ENCODE measurements at regions of chr18 and their contacts with region 1.

Region 1: DNA sequence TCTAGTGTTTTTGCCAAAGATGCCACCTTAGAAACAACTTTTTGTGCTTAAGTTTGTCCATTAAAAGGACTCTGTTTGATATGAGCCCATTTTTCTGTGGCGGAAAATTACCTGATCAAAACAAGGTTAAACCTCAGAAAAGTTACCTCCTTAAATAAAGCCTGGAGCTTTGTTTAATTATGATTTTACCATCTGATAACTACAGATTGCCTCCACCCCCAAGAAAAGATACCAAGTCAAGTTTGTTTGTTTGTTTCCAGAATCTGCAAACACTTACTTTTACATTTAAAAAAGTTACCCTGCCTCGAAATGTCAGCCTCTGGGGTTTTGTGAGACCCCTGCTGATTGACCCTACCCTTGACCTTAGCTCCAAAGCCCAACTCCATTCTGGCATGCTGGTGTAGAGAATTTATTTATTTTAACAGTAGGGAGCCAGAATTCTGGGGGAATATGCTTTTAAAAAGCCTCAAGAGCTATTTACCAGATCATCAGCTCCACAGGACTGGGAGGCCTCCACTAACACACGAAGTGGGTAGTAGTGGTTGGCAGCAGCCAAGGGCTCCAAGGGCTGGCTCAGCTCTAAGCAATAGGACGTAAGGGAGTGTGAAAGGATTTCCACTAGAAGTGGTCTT is 23.3 kb upstream of the GREB1L start:
- DNase-seq: no peak
- ATAC-seq: no peak
- H3K4me3 ChIP-seq: no peak overlapping the region
- H3K27ac ChIP-seq: no peak overlapping the region
- H3K4me1 ChIP-seq: no peaks in the 10 kb centered on the region
- H3K27me3 ChIP-seq: no peaks in the 10 kb centered on the region
- CTCF ChIP-seq: no peak
- EP300 ChIP-seq: no peak
- POLR2A ChIP-seq: no peak
- RAD21 ChIP-seq: no peak

Region 2: DNA sequence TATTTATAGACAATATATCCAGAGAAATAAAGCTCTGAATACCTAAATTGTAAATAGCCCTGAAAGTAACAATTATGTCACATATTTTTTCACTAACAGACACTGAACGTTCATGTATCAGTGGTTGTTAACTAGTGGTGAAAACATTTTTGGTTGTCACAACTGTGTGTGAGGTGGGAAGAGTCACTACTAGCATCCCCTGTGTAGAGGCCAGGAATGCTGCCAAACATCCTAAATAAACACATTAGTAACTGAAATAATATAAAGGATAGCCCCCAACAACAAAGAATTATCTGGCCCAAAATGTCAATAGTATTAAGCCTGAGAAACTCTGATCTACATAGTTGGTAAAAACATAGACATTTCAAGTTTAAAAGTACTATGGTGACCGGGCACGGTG is 171.6 kb before region 1 on chr18:
- CTCF ChIA-PET with region 1: no interaction called
- POLR2A ChIA-PET with region 1: no interaction called
- RAD21 ChIA-PET with region 1: no interaction called
- SMC1A ChIA-PET with region 1: no interaction called
- in situ Hi-C with region 1: no loop called
- intact Hi-C with region 1: no loop called
- DNase-seq: no peak
- ATAC-seq: no peak
- H3K4me3 ChIP-seq: no peak overlapping the region
- H3K27ac ChIP-seq: no peak overlapping the region
- H3K4me1 ChIP-seq: no peaks in the 10 kb centered on the region
- H3K27me3 ChIP-seq: no peaks in the 10 kb centered on the region
- CTCF ChIP-seq: no peak
- EP300 ChIP-seq: no peak
- POLR2A ChIP-seq: no peak
- RAD21 ChIP-seq: no peak

Region 3: GRCh38 chr18:21155443-21155842 is 63.3 kb before region 1 on chr18:
- CTCF ChIA-PET with region 1: no interaction called
- POLR2A ChIA-PET with region 1: no interaction called
- RAD21 ChIA-PET with region 1: no interaction called
- SMC1A ChIA-PET with region 1: no interaction called
- in situ Hi-C with region 1: no loop called
- intact Hi-C with region 1: loop called (anchors 10 kb)
- DNase-seq: no peak
- ATAC-seq: no peak
- H3K4me3 ChIP-seq: no peak overlapping the region
- H3K27ac ChIP-seq: no peak overlapping the region
- H3K4me1 ChIP-seq: no peaks in the 10 kb centered on the region
- H3K27me3 ChIP-seq: no peaks in the 10 kb centered on the region; a peak in 1 of 4 replicates
- CTCF ChIP-seq: no peak
- EP300 ChIP-seq: no peak
- POLR2A ChIP-seq: no peak
- RAD21 ChIP-seq: no peak

Region 4: DNA sequence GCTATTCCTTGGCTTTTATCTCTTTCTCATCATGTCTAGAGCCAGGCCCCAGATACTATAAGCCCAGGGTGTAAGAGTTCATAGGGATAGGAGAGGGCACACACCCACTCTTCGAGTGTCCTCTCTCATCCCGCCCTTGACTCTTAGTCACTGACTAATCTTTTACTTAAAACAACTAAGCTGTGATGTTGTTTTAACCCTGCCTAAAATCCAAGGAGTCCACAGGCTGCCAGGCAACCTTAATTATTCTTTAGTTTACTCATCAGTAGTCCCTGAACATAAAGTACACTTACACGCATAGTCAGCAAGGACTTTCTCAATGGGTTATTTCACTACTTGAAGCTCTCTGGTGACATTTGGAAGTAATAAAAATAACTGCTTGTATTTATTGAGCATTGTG is 51.7 kb after region 1 on chr18:
- CTCF ChIA-PET with region 1: no interaction called
- POLR2A ChIA-PET with region 1: no interaction called
- RAD21 ChIA-PET with region 1: no interaction called
- SMC1A ChIA-PET with region 1: no interaction called
- in situ Hi-C with region 1: no loop called
- intact Hi-C with region 1: no loop called
- DNase-seq: no peak
- ATAC-seq: no peak
- H3K4me3 ChIP-seq: no peak overlapping the region
- H3K27ac ChIP-seq: no peak overlapping the region
- H3K4me1 ChIP-seq: no peaks in the 10 kb centered on the region
- H3K27me3 ChIP-seq: no peaks in the 10 kb centered on the region
- CTCF ChIP-seq: no peak
- EP300 ChIP-seq: no peak
- POLR2A ChIP-seq: no peak
- RAD21 ChIP-seq: no peak

Region 5: GRCh38 chr18:22363867-22364463 is 1145.2 kb after region 1 on chr18:
- CTCF ChIA-PET with region 1: no interaction called
- POLR2A ChIA-PET with region 1: no interaction called
- RAD21 ChIA-PET with region 1: no interaction called
- SMC1A ChIA-PET with region 1: no interaction called
- in situ Hi-C with region 1: no loop called
- intact Hi-C with region 1: no loop called
- DNase-seq: no peak
- ATAC-seq: no peak
- H3K4me3 ChIP-seq: no peak overlapping the region
- H3K27ac ChIP-seq: no peak overlapping the region
- H3K4me1 ChIP-seq: no peaks in the 10 kb centered on the region
- H3K27me3 ChIP-seq: no peaks in the 10 kb centered on the region
- CTCF ChIP-seq: no peak
- EP300 ChIP-seq: no peak
- POLR2A ChIP-seq: no peak
- RAD21 ChIP-seq: no peak